ENCODE measurements at regions of chr11 and their contacts with region 1.

Region 1: DNA sequence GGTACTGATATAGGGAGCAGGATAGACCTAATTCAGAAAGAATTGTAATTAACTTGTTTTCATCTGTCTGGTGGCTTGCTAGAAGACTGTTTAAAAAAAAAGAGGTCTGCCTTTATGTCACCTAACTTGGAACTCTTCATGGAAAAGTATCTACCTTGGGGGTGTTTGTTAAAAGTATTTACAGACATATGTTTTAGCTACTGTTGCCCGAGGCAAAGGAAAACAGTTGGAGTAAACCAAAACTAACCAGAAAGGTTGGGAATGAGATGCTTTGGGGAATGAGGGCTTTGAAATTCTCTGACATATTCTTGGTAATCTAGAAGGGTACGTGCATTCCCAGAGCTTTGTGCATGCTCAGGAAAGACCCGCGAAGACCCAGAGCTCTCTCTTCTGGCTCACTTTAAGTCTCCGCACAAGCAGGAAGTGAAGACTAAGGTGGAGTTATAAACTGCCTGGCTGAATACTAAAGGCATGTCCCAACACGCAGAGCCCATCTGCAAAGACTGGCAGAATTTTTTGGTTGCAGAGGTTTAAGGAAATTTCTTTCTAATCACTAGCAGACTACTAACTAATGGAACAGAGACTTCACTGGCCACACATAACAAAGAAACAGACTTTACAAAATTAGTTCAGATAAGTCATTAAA is 33.2 kb downstream of the HIKESHI start:
- DNase-seq: no peak
- H3K4me3 ChIP-seq: no peak overlapping the region
- H3K4me3 Mint-ChIP-seq: no peak overlapping the region
- H3K27ac Mint-ChIP-seq: no peak overlapping the region
- H3K4me1 ChIP-seq: no peaks in the 10 kb centered on the region
- H3K4me1 Mint-ChIP-seq: no peaks in the 10 kb centered on the region
- H3K27me3 ChIP-seq: no peaks in the 10 kb centered on the region
- H3K27me3 Mint-ChIP-seq: no peaks in the 10 kb centered on the region
- CTCF ChIP-seq: no peak

Region 2: DNA sequence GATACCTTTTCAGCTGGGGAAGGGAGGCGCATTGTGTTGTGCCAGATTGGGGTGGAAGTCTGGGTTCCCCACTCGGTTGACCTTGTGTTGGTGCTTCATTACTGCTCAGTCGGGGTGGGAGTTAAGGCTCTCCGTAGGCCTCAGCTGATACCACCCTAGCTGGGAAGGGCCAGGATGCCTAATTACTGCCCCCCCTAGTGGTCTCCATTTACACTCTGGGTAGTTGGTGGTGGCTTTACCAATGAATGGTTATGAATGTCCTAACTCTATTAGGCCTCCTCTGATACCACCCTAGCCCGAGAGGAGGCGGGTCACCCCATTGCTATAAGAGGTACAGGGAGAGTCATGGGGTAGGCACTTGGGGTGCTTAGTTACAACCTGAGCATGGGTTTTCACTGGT is 60.7 kb before region 1 on chr11:
- CTCF ChIA-PET with region 1: no interaction called
- POLR2A ChIA-PET with region 1: no interaction called
- intact Hi-C with region 1: loop called (anchors 2 kb)
- DNase-seq: peak in 1 of 2 experiments; percentile 57
- H3K4me3 ChIP-seq: no peak overlapping the region
- H3K4me3 Mint-ChIP-seq: no peak overlapping the region
- H3K27ac Mint-ChIP-seq: no peak overlapping the region
- H3K4me1 ChIP-seq: no peaks in the 10 kb centered on the region
- H3K4me1 Mint-ChIP-seq: peaks cover 10% of the 10 kb centered on the region
- H3K27me3 ChIP-seq: no peaks in the 10 kb centered on the region
- H3K27me3 Mint-ChIP-seq: no peaks in the 10 kb centered on the region
- CTCF ChIP-seq: peak; percentile 46 to 54